ENCODE measurements at regions of chr1 and their contacts with region 1.

Region 1: DNA sequence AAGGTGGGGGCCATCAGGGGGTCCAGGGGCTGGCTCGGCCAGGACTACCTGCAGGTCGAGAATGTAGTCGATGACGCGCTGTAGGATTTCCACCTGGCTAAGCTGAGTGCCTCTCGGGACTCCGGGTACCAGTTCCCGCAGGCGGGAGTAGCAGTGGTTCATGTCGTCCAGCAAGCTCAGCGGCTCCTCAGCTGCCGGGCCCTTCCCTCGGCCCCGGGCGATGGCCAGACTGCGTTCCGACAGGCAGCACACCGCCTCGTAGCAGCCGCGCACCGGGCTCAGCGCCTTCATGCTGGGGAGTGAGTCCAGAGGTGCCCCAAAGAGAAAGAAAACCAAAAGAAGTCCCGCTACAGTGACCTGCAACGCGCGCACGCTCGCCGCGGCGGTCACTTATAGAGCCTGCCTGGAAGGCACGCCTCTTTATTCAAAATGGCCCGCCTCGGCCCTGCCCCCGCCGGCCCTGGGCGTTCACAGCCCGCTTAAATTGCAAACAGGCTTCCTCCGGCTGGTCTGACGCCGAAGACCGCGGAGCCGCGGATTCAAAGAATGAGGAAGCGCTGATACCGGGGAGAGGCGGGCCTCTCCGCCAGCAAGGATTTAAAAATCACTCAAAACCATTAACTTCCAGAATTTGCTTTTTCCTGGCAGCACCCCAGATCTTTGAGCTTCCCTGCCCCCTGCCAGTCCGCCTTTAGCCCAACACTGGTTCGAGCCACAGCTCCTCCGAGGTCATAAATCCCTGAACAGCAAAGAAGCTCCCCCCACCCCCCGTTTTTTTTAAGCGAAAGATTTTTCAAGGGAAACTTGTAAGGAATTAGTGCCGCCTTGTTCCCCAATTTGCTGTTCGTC is at the start of gene ID3:
- DNase-seq: peak; percentile 95
- ATAC-seq: peak; percentile 80
- H3K4me3 Mint-ChIP-seq: peak within 1 kb of the TSS; percentile 84
- H3K27ac Mint-ChIP-seq: peak within 1 kb of the TSS; percentile 71
- H3K4me1 Mint-ChIP-seq: peaks cover 50% of the 10 kb centered on the region
- H3K27me3 Mint-ChIP-seq: peaks cover 42% of the 10 kb centered on the region
- total RNA-seq, gene ID3: 14.4 to 34.2 TPM

Region 2: GRCh38 chr1:23505851-23506250 is 53.5 kb before region 1 on chr1:
- CTCF ChIA-PET with region 1: no interaction called
- DNase-seq: no peak
- ATAC-seq: no peak
- H3K4me3 Mint-ChIP-seq: no peak overlapping the region
- H3K27ac Mint-ChIP-seq: no peak overlapping the region
- H3K4me1 Mint-ChIP-seq: no peaks in the 10 kb centered on the region
- H3K27me3 Mint-ChIP-seq: no peaks in the 10 kb centered on the region

Region 3: GRCh38 chr1:23530747-23531561 is 28.4 kb before region 1 on chr1 and contains the start of gene E2F2:
- CTCF ChIA-PET with region 1: interaction called, 15 read pairs
- DNase-seq: peak; percentile 92
- ATAC-seq: peak; percentile 73
- H3K4me3 Mint-ChIP-seq: peak within 1 kb of the TSS; percentile 91
- H3K27ac Mint-ChIP-seq: peak within 1 kb of the TSS; percentile 94
- H3K4me1 Mint-ChIP-seq: peaks cover 69% of the 10 kb centered on the region
- H3K27me3 Mint-ChIP-seq: peaks cover 3% of the 10 kb centered on the region
- total RNA-seq, gene E2F2: 77.4 to 103 TPM

Region 4: DNA sequence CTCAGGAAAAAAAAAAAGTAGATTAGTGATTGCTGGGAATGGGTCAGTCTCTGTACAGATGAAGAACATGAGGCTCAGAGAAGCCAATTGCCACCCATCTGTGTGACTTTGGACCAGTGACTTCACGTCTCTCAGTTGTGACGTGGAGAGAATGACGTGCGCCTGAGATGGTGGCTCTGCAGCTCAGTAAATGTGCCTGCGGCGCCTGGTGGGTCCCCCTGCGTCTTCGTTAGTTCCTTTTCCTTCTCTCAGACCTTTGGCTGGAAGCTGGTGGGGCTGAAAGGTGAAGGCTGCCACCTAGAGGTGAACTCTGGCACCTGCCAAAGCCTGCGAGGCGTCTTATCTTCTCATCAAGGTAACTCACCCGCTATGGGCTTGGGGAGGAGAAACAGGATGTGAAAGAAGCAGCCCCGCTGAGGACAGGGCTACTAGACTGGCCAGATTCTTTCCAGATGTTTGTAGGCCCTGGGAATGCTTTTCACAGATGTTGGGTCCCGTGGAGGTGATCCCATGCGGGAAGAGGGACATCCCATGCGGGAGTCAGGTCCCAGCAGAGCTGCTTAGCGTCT is 19.6 kb before region 1 on chr1:
- CTCF ChIA-PET with region 1: interaction called, 41 read pairs
- DNase-seq: peak; percentile 97
- ATAC-seq: peak; percentile 96
- H3K4me3 Mint-ChIP-seq: peak overlapping the region; percentile 48
- H3K27ac Mint-ChIP-seq: peak overlapping the region; percentile 75
- H3K4me1 Mint-ChIP-seq: peaks cover 20% of the 10 kb centered on the region
- H3K27me3 Mint-ChIP-seq: peaks cover 12% of the 10 kb centered on the region

Region 5: GRCh38 chr1:23577056-23578004 is 18.0 kb after region 1 on chr1:
- CTCF ChIA-PET with region 1: interaction called, 18 read pairs
- DNase-seq: peak; percentile 72
- ATAC-seq: peak; percentile 95
- H3K4me3 Mint-ChIP-seq: peak overlapping the region; percentile 20
- H3K27ac Mint-ChIP-seq: peak overlapping the region; percentile 84
- H3K4me1 Mint-ChIP-seq: peaks cover 27% of the 10 kb centered on the region
- H3K27me3 Mint-ChIP-seq: no peaks in the 10 kb centered on the region

Region 6: DNA sequence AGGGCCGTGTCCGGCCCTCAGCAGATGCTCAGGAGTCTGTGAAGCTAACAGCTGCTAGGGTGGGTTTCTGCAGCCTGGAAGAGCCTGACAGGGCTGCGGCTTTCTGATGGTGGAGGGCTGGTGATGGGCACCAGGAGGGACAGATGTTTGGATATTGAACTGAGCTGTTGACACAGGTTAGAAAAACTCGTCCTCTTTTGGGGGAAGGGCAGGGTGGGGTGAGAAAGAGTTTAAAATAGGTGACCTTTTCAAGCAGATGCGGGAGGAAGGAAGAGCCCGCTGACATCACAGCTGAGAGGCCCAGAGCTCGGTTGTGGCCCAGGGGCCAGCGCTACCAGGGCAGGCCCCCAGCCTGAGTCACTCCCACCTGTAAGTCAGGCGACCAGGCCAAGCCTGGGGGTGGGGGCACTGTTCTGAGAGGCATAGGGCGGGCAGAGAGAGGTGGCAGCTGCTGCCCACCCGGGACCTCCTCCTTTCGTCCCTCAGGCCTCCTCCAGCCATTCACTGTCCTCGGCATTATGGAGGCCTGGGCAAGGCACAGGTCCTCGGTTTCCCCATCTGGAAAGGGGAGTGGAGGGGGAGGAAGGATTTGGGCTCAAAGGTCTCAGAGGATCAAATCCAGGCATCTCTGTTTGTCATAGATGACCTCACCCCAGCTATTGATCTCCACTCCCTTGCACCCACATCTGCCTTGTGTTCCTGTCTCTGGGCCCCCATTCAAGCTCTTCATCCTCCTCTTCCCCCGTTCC is 32.3 kb after region 1 on chr1:
- CTCF ChIA-PET with region 1: interaction called, 20 read pairs
- DNase-seq: peak; percentile 76
- ATAC-seq: peak; percentile 76
- H3K4me3 Mint-ChIP-seq: peak overlapping the region; percentile 14
- H3K27ac Mint-ChIP-seq: peak overlapping the region; percentile 76
- H3K4me1 Mint-ChIP-seq: peaks cover 47% of the 10 kb centered on the region
- H3K27me3 Mint-ChIP-seq: peaks cover 2% of the 10 kb centered on the region

Region 7: DNA sequence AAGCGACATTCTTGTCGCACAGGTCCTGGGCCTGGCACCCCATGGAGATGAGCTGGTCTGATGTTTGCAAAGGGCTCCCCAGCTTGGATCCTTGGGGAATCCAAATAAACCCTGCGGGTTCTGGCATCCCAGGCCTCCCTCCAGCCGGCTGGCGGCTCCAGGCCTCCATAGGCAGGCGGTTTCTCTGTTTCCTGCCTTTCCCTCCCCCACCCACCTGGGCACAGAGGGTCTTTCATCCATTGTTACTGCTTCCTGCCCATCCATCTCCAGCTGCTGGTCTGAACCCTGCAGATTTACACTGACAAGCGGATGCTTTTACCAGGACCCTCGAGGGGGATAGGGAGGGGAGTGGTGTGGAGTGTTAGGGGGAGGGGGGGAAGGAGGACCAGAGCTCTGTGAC is 39.1 kb after region 1 on chr1:
- CTCF ChIA-PET with region 1: interaction called, 19 read pairs
- DNase-seq: no peak
- ATAC-seq: no peak
- H3K4me3 Mint-ChIP-seq: no peak overlapping the region
- H3K27ac Mint-ChIP-seq: no peak overlapping the region
- H3K4me1 Mint-ChIP-seq: peaks cover 70% of the 10 kb centered on the region
- H3K27me3 Mint-ChIP-seq: no peaks in the 10 kb centered on the region

Region 8: DNA sequence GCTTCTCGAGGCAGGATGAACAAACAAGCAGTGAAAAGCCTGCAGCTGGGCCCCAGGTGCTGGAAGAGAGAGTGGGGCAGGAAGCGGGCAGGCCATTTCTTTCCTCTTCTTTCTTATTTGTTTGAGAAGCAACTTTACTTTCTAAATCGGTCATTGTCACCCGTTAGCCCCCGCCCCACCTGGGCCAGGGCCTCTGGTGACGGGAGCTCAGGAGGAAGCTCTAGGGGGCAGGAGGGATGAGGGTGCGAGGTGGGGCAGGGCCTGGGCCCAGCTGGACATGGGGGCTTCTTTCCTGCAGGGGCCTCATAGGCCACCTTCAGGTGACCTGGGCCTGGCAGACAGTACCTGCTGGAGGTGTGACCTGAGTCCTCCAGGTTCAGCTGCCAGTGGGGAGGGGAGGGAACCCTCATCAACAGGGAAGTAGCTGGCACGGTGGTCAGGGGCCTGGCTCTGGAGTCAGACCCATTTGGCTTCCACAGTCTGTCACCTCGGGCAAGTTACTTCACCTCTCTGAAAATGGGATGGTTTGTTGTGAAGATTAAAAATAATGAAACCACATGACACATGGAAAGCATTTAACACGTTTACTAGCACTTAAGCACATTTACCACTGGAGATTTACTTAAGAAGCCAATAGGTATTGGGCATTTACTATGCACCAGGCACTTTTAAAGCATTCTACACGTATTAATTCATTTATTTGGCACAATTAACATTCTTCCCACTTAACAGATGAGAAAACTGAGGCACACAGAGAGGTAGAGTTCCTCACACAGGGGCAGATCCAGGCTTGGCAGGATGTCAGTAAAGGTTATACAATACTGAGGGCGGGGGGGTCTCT is 54.1 kb after region 1 on chr1:
- CTCF ChIA-PET with region 1: interaction called, 12 read pairs
- DNase-seq: peak; percentile 81
- ATAC-seq: peak; percentile 79
- H3K4me3 Mint-ChIP-seq: no peak overlapping the region
- H3K27ac Mint-ChIP-seq: peak overlapping the region; percentile 85
- H3K4me1 Mint-ChIP-seq: peaks cover 36% of the 10 kb centered on the region
- H3K27me3 Mint-ChIP-seq: peaks cover under 1% of the 10 kb centered on the region

Region 9: GRCh38 chr1:23673086-23673813 is 113.9 kb after region 1 on chr1:
- CTCF ChIA-PET with region 1: no interaction called
- DNase-seq: peak; percentile 60
- ATAC-seq: peak; percentile 47
- H3K4me3 Mint-ChIP-seq: no peak overlapping the region
- H3K27ac Mint-ChIP-seq: no peak overlapping the region
- H3K4me1 Mint-ChIP-seq: no peaks in the 10 kb centered on the region
- H3K27me3 Mint-ChIP-seq: peaks cover 30% of the 10 kb centered on the region